ENCODE measurements at regions of chr22 and their contacts with region 1.

Region 1: GRCh38 chr22:50530877-50531545 is 1.2 kb upstream of the TYMP start:
- DNase-seq: peak; percentile 92
- ATAC-seq: peak; percentile 45
- H3K4me3 Mint-ChIP-seq: peak overlapping the region; percentile 87
- H3K27ac Mint-ChIP-seq: peak overlapping the region; percentile 97
- H3K4me1 Mint-ChIP-seq: peaks cover 45% of the 10 kb centered on the region
- H3K27me3 Mint-ChIP-seq: no peaks in the 10 kb centered on the region

Region 2: GRCh38 chr22:49979587-49980264 is 551.3 kb before region 1 on chr22:
- CTCF ChIA-PET with region 1: interaction called, 3 read pairs
- POLR2A ChIA-PET with region 1: no interaction called
- intact Hi-C with region 1: loop called in 1 of 2 experiments (anchors 5 kb)
- DNase-seq: peak; percentile 69
- ATAC-seq: peak; percentile 13
- H3K4me3 Mint-ChIP-seq: peak overlapping the region; percentile 15
- H3K27ac Mint-ChIP-seq: peak overlapping the region; percentile 83
- H3K4me1 Mint-ChIP-seq: peaks cover 46% of the 10 kb centered on the region
- H3K27me3 Mint-ChIP-seq: peaks cover 7% of the 10 kb centered on the region

Region 3: GRCh38 chr22:50544078-50544745 is 13.2 kb after region 1 on chr22:
- CTCF ChIA-PET with region 1: interaction called, 72 read pairs
- POLR2A ChIA-PET with region 1: interaction called, 25 read pairs
- intact Hi-C with region 1: loop called (anchors 1 kb)
- DNase-seq: peak; percentile 94
- ATAC-seq: peak; percentile 49
- H3K4me3 Mint-ChIP-seq: peak overlapping the region; percentile 35
- H3K27ac Mint-ChIP-seq: peak overlapping the region; percentile 78
- H3K4me1 Mint-ChIP-seq: peaks cover 61% of the 10 kb centered on the region
- H3K27me3 Mint-ChIP-seq: no peaks in the 10 kb centered on the region

Measured in activated CD4-positive, alpha-beta T cell treated with anti-CD3 and anti-CD28 coated beads for 36 hours (primary cell).